ENCODE measurements at regions of chr5 and their contacts with region 1.

Region 1: GRCh38 chr5:39411051-39411450 is 13.7 kb downstream of the DAB2 start:
- DNase-seq: no peak
- ATAC-seq: no peak
- H3K4me3 ChIP-seq: no peak overlapping the region
- H3K27ac ChIP-seq: no peak overlapping the region
- H3K4me1 ChIP-seq: peaks cover 58% of the 10 kb centered on the region
- H3K27me3 ChIP-seq: no peaks in the 10 kb centered on the region
- CTCF ChIP-seq: no peak
- EP300 ChIP-seq: no peak
- POLR2A ChIP-seq: no peak
- RAD21 ChIP-seq: no peak

Region 2: DNA sequence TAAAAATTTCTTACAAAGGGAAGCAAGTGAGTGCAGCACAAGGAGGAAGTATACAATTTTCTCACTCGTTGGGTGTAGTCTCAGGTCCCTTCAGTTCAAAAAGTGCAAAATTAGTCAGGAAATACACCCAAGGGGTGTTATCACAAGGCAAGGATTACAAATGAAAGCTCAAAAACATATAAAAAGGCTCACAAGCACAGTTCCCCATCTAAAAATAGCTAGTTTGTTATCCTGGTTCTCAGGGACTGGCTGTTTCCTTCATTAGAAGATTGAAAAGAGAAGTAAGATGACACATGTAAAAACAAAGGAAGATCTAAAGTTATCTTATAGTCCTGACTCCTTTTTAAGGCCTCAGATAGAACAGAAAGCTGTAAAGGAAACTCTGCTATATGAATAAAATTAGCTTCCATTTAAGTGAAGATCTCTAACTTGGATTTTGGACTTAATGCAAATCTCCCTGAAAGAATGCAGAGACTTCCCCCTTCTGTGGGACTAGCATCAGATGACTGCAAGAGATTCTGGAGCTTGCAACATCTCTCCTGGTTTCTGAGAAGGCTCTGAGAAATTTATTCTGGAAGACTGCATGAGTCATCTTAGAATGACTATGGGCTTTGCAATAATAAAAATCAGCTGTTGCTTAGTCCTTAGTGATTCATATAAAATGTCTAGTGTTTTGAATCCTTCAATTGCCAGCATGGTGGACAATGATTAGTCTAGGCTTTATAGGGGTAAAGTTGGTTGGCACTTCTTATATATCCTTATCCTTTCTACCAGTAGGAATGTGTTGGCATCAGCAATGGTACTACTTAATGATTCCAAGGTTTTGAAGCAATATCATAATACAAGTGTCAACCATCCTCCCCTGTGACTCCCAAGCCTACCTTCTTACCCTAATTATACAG is 11.7 kb before region 1 on chr5:
- CTCF ChIA-PET with region 1: no interaction called
- POLR2A ChIA-PET with region 1: interaction called, 10 read pairs
- in situ Hi-C with region 1: no loop called
- intact Hi-C with region 1: no loop called
- DNase-seq: peak; percentile 30
- ATAC-seq: peak; percentile 28; the same call in 2 of the 3 replicates
- H3K4me3 ChIP-seq: no peak overlapping the region
- H3K27ac ChIP-seq: no peak overlapping the region
- H3K4me1 ChIP-seq: peaks cover 58% of the 10 kb centered on the region
- H3K27me3 ChIP-seq: no peaks in the 10 kb centered on the region; a peak in 1 of 5 replicates
- CTCF ChIP-seq: no peak
- EP300 ChIP-seq: no peak
- POLR2A ChIP-seq: no peak
- RAD21 ChIP-seq: no peak